ENCODE measurements at regions of chr16 and their contacts with region 1.

Region 1: GRCh38 chr16:49834531-49835151 is 21.3 kb downstream of the ZNF423 start:
- DNase-seq: no peak
- H3K4me3 ChIP-seq: no peak overlapping the region
- H3K27ac ChIP-seq: peak overlapping the region; percentile 62 to 77
- H3K4me1 ChIP-seq: peaks cover 6% of the 10 kb centered on the region
- H3K27me3 ChIP-seq: no peaks in the 10 kb centered on the region
- CTCF ChIP-seq: no peak
- POLR2A ChIP-seq: no peak

Region 2: DNA sequence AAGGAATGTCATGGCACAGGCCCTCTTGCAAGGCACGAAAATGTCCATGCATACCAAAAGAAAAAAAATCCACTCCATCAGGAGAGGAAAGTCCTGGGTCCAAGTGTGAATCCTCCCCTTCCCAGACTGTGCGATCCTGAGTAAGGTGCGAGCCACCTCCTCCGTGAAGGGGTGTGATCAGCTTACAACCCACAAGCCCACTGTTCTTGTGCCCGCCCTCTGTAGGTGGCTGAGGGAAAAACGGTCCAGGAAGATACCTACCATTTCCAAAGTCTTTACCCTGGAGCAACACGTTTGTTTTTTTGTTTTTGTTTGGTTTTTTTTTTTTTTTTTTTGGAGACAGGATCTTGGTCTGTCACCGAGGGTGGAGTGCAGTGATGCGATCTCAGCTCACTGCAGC is 95.3 kb before region 1 on chr16:
- intact Hi-C with region 1: loop called (anchors 10 kb)
- DNase-seq: no peak
- H3K4me3 ChIP-seq: no peak overlapping the region
- H3K27ac ChIP-seq: no peak overlapping the region
- H3K4me1 ChIP-seq: no peaks in the 10 kb centered on the region
- H3K27me3 ChIP-seq: peaks cover 3% of the 10 kb centered on the region
- CTCF ChIP-seq: no peak
- POLR2A ChIP-seq: no peak

Region 3: DNA sequence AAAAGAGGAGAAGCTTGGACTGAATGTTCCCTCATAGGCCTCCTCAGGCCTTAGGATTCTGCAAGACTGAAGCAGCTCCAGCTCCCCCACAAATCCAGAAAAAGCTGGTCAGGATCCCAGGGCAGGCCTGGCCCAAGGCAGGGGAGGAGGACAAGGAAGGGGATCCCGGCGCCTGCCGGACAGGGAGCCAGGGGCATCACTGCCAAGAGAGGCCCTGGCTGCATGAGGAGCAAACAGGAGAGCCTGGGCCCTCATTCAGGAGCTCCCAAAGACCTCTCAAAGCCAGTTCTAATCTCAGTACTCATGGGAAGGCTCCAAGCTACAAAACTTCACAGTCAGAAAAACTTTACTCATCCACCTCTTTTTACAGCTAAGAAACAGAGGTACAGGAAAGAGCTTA is 46.1 kb before region 1 on chr16:
- intact Hi-C with region 1: loop called (anchors 5 kb)
- DNase-seq: no peak
- H3K4me3 ChIP-seq: no peak overlapping the region
- H3K27ac ChIP-seq: peak overlapping the region; percentile 21 to 53
- H3K4me1 ChIP-seq: no peaks in the 10 kb centered on the region
- H3K27me3 ChIP-seq: no peaks in the 10 kb centered on the region
- CTCF ChIP-seq: no peak
- POLR2A ChIP-seq: no peak

Measured in prostate gland (tissue), 2 donors.